ENCODE measurements at regions of chr3 and their contacts with region 1.

Region 1: DNA sequence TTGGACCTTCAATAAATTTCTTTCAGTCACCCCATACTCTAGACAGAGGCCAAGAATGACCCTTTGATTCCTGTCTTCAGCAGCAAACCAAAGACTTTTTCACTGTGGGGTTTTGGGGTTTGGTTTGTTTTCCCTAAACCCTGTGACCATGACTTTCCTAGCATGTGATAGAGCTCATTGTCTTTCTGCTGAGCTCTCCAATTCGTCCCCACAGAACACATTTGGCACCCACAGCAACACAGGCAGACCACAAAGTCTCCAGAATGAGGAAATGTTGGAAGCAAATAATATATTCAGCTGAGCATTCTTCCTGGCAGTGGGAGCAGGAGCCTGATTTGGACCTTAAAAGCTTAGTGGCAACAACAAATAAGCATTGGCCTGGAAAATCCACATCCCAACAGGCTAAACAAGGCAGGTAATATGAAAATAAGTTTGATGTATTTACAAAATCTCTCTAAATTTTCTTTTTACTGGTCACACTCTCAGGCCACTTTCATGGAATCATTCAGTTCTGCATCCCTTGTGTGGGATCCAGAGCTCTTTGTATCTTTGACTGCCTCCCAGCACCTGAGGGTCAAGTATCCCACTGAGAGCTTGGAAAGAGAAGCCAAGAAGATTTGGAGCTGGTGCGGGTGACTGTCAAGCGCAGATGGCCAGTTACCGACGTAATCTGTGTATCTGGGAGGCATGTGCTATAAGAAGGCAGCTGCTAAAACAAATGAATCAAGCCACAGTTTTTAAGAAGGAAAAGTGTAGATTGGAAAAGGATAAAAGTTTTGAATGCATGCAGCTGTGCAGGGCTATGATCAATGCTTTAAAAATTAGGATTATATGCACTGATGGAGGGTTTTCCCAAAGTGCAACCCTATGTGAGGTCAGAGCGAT is 36.5 kb upstream of the CPB1 start:
- DNase-seq: peak in 8 of 10 donors; percentile 42 to 84 (median 54)
- H3K4me3 ChIP-seq: peak overlapping the region in 55 of 59 donors; percentile 1 to 64 (median 37)
- H3K27ac ChIP-seq: peak overlapping the region; percentile 57 to 99 (median 94)
- H3K27me3 ChIP-seq: no peaks in the 10 kb centered on the region
- CTCF ChIP-seq: peak in 4 of 56 donors; percentile 9 to 15 (median 11)

Region 2: GRCh38 chr3:148477375-148477774 is 313.7 kb before region 1 on chr3:
- intact Hi-C with region 1: no loop called
- DNase-seq: no peak
- H3K4me3 ChIP-seq: no peak overlapping the region
- H3K27ac ChIP-seq: no peak overlapping the region
- H3K27me3 ChIP-seq: peaks cover 0 to 3% (median 0%) of the 10 kb centered on the region in 45 donors
- CTCF ChIP-seq: no peak

Region 3: GRCh38 chr3:148861277-148861869 is 70.3 kb after region 1 on chr3:
- intact Hi-C with region 1: loop called in 1 of 2 experiments (anchors 5 kb)
- DNase-seq: no peak
- H3K4me3 ChIP-seq: no peak overlapping the region
- H3K27ac ChIP-seq: no peak overlapping the region
- H3K27me3 ChIP-seq: peaks cover 0 to 2% (median 0%) of the 10 kb centered on the region in 45 donors
- CTCF ChIP-seq: peak; percentile 64 to 95 (median 79)

Measured in dorsolateral prefrontal cortex (tissue), 120 donors.